Vagina (tissue), 2 donors: ENCODE measurements at regions of chr4 and their contacts with region 1.

Region 1: DNA sequence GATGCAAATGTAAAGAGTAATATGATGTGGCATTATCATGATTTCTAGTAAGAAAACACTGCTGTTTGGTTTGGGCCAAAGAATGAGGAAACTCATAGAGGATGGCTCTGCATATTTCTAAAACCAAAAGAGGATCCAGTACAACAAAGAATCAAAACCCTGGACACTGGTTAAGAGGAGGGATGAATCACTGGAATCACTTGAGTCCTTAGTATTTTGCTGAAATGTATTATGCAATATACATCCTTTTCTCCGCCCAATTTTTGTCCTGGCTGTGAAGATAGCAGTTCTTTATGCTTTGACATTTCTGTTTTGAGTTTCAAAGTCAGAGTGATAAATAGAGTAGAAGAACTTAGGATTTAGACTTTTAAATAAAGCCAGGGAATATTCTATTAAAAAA is 345.9 kb downstream of the PACRGL start:
- DNase-seq: no peak
- H3K4me3 ChIP-seq: no peak overlapping the region
- H3K27ac ChIP-seq: no peak overlapping the region
- H3K4me1 ChIP-seq: no peaks in the 10 kb centered on the region
- H3K27me3 ChIP-seq: no peaks in the 10 kb centered on the region
- CTCF ChIP-seq: no peak
- POLR2A ChIP-seq: no peak

Region 2: DNA sequence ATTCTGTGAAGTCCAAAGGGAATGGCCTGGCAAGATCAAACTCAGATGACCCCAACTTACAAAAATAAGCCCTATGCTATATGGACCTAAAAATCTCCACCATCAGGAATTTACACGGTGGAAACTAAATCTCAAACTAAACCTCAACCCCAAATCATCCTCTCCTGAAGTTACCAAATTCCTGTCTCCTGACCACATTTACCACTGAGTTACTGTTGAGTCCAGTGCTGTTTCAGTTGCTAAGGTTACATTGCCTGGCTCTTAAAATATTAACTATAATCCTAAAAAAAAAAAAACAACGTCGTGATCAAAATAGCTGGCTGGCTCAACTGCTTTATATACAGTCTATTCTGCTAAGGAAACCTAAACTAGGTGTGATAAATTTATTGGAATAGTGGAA is 1109.7 kb before region 1 on chr4:
- intact Hi-C with region 1: no loop called
- DNase-seq: no peak
- H3K4me3 ChIP-seq: no peak overlapping the region
- H3K27ac ChIP-seq: no peak overlapping the region
- H3K4me1 ChIP-seq: no peaks in the 10 kb centered on the region
- H3K27me3 ChIP-seq: no peaks in the 10 kb centered on the region
- CTCF ChIP-seq: no peak
- POLR2A ChIP-seq: no peak

Region 3: GRCh38 chr4:21067351-21067750 is 21.2 kb after region 1 on chr4:
- intact Hi-C with region 1: loop called (anchors 2 kb)
- DNase-seq: no peak
- H3K4me3 ChIP-seq: no peak overlapping the region
- H3K27ac ChIP-seq: no peak overlapping the region
- H3K4me1 ChIP-seq: no peaks in the 10 kb centered on the region
- H3K27me3 ChIP-seq: no peaks in the 10 kb centered on the region
- CTCF ChIP-seq: no peak
- POLR2A ChIP-seq: no peak